AG04449 (cell line): ENCODE measurements at regions of chr5 and their contacts with region 1.

Region 1: GRCh38 chr5:157312492-157312891 is 46.6 kb downstream of the CYFIP2 start:
- DNase-seq: no peak
- H3K4me3 ChIP-seq: no peak overlapping the region
- CTCF ChIP-seq: peak; percentile 81

Region 2: DNA sequence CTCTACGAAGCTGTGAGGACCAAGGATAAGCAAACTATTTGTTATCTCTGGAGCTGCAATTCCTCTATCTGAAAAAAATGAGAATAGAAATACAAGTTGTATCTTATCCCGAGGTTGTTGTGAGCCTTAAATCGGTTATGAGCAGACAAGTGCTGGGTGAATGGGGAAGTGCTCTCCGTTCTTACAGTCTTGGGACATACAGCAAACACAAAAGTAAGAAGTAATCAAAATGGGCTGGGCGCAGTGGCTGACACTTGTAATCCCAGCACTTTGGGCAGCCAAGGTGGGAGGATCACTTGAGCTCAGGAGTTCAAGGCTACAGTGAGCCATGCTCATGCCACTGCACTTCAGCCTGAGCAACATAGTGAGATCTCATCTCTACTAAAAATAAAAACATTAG is 100.2 kb before region 1 on chr5:
- CTCF ChIA-PET with region 1: no interaction called
- POLR2A ChIA-PET with region 1: no interaction called
- DNase-seq: no peak
- H3K4me3 ChIP-seq: no peak overlapping the region
- CTCF ChIP-seq: no peak

Region 3: GRCh38 chr5:157245477-157245876 is 67.0 kb before region 1 on chr5:
- CTCF ChIA-PET with region 1: interaction called, 185 read pairs
- POLR2A ChIA-PET with region 1: no interaction called
- DNase-seq: no peak
- H3K4me3 ChIP-seq: no peak overlapping the region
- CTCF ChIP-seq: no peak

Region 4: DNA sequence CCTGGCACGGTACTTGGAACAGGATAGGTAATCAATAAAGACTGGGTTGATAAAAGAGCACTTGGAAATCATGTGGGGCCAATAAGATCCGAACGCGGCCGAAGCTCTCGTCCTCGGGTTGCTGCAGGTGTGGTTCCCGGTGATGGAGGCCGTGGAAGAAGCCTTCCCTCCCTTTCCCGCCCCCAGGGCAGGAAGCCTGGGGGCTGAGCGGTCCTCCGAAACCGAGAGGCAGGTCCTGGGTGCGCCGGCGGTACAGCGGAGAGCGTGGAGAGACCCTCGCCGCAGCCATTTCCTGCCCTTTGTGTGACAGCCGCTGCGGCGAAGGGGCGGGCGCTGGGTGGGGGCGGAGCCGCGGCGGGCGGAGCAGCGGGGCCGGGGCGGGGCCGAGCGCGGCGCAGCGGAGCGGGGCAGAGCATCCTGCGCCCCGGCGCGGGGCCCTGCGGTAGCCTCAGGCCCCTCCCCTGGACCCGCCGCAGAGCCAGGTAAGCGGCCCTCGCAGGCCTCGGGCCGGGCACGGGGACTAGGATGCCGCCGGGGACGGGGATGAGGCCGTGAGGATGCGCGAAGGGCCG is 46.7 kb before region 1 on chr5 and contains the start of gene CYFIP2:
- CTCF ChIA-PET with region 1: interaction called, 185 read pairs
- POLR2A ChIA-PET with region 1: interaction called, 3 read pairs
- DNase-seq: no peak
- H3K4me3 ChIP-seq: peak within 1 kb of the TSS; percentile 67
- CTCF ChIP-seq: no peak